ENCODE measurements at regions of chr15 and their contacts with region 1.

Region 1: GRCh38 chr15:25501828-25502446 is 63.1 kb upstream of the UBE3A start:
- DNase-seq: peak in 2 of 9 experiments; percentile 37 to 45
- ATAC-seq: no peak
- H3K4me3 ChIP-seq: no peak overlapping the region
- H3K4me3 Mint-ChIP-seq: no peak overlapping the region
- H3K27ac ChIP-seq: no peak overlapping the region
- H3K27ac Mint-ChIP-seq: no peak overlapping the region
- H3K4me1 ChIP-seq: no peaks in the 10 kb centered on the region
- H3K4me1 Mint-ChIP-seq: no peaks in the 10 kb centered on the region
- H3K27me3 ChIP-seq: no peaks in the 10 kb centered on the region
- H3K27me3 Mint-ChIP-seq: peaks cover 1% of the 10 kb centered on the region
- CTCF ChIP-seq: peak; percentile 29

Region 2: GRCh38 chr15:23642413-23643044 is 1859.4 kb before region 1 on chr15:
- CTCF ChIA-PET with region 1: interaction called, 5 read pairs
- POLR2A ChIA-PET with region 1: no interaction called
- intact Hi-C with region 1: loop called in 1 of 2 experiments (anchors 2 kb)
- DNase-seq: peak in 6 of 9 experiments; percentile 7 to 46 (median 23)
- ATAC-seq: no peak
- H3K4me3 ChIP-seq: no peak overlapping the region
- H3K4me3 Mint-ChIP-seq: no peak overlapping the region
- H3K27ac ChIP-seq: no peak overlapping the region
- H3K27ac Mint-ChIP-seq: no peak overlapping the region
- H3K4me1 ChIP-seq: no peaks in the 10 kb centered on the region
- H3K4me1 Mint-ChIP-seq: no peaks in the 10 kb centered on the region
- H3K27me3 ChIP-seq: no peaks in the 10 kb centered on the region
- H3K27me3 Mint-ChIP-seq: no peaks in the 10 kb centered on the region
- CTCF ChIP-seq: peak; percentile 64

Region 3: GRCh38 chr15:24761704-24762302 is 740.1 kb before region 1 on chr15:
- CTCF ChIA-PET with region 1: no interaction called
- POLR2A ChIA-PET with region 1: no interaction called
- intact Hi-C with region 1: loop called (anchors 5 kb)
- DNase-seq: no peak
- ATAC-seq: no peak
- H3K4me3 ChIP-seq: no peak overlapping the region
- H3K4me3 Mint-ChIP-seq: no peak overlapping the region
- H3K27ac ChIP-seq: no peak overlapping the region
- H3K27ac Mint-ChIP-seq: no peak overlapping the region
- H3K4me1 ChIP-seq: no peaks in the 10 kb centered on the region
- H3K4me1 Mint-ChIP-seq: no peaks in the 10 kb centered on the region
- H3K27me3 ChIP-seq: no peaks in the 10 kb centered on the region
- H3K27me3 Mint-ChIP-seq: no peaks in the 10 kb centered on the region
- CTCF ChIP-seq: no peak

Region 4: DNA sequence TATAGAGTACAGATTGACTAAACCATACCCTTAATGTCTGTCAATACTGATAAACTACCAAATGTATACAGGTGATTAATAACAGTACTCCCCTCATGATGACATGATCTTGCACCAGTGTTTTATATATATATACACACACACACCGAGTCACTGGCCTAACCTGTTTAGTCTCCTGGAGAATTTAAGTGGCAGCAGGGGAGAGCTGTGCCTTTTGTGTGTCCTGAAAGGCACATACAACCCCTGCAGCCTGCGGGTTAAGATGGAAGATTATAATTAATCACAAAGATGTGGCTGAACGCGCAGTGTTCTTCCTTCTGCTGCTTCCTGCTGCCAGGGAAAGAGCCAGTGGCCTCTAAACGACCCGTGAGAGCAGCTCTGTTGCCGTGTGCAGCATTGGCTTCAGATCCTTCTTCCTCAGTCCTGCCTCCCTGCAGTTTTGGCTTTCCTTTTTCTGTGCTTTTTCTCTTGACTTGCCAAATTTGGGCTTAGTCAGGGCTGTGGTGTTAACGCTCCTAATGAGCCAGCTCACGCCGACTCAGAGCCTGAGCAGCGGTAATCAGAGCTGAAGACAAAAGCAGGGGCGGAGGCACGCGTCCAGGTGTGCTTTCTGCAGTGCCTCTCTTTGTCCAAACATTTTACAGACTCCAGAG is 20.6 kb before region 1 on chr15:
- CTCF ChIA-PET with region 1: no interaction called
- POLR2A ChIA-PET with region 1: no interaction called
- intact Hi-C with region 1: no loop called
- DNase-seq: no peak
- ATAC-seq: no peak
- H3K4me3 ChIP-seq: no peak overlapping the region
- H3K4me3 Mint-ChIP-seq: no peak overlapping the region
- H3K27ac ChIP-seq: no peak overlapping the region
- H3K27ac Mint-ChIP-seq: no peak overlapping the region
- H3K4me1 ChIP-seq: no peaks in the 10 kb centered on the region
- H3K4me1 Mint-ChIP-seq: no peaks in the 10 kb centered on the region
- H3K27me3 ChIP-seq: no peaks in the 10 kb centered on the region
- H3K27me3 Mint-ChIP-seq: peaks cover 6% of the 10 kb centered on the region
- CTCF ChIP-seq: no peak